CD8-positive, alpha-beta T cell (primary cell): ENCODE measurements at regions of chr6 and their contacts with region 1.

Region 1: DNA sequence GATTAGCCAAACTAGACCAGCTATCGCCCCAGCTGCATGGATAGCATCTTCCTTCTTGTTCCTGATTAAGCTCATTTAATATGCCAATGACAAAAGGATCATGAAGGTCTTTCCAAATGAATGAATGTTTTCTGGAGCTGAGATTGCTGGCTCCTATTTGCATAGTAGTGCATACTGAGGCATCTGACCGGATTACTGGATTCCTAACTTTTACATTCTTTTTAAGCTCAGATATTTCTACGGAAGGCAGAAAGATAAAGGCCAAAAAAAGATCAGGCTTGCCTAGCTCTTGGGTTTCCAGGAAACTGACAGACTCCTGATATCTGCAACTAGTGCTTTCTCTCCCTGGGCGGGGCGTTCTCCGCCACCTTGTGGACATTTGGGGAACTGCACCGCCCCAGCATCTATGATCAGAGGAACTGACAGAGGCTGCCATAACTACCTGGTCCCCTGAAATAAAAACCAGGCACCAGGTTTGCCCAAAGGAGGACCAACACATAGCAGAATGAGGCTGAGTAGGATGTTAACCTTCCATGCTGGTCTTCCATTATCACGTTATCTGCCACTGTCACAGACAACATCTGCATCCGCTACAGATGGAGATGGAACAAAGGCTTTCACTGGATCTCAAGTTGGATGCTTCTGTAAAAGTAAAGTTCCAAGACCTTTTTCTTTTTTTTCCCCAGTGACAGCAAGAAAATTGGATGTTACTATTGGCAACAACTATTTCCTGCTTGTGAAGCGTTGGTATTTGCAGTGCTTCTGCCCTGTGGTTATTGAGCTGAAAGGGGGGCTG is 33.2 kb downstream of the NT5E start:
- DNase-seq: peak; percentile 62 to 94 (median 78)
- ATAC-seq: peak; percentile 99
- H3K4me3 ChIP-seq: no peak overlapping the region
- H3K4me3 Mint-ChIP-seq: no peak overlapping the region
- H3K27ac ChIP-seq: no peak overlapping the region
- H3K27ac Mint-ChIP-seq: no peak overlapping the region
- H3K4me1 ChIP-seq: peaks cover 7% of the 10 kb centered on the region
- H3K4me1 Mint-ChIP-seq: peaks cover 13% of the 10 kb centered on the region
- H3K27me3 ChIP-seq: no peaks in the 10 kb centered on the region
- H3K27me3 Mint-ChIP-seq: no peaks in the 10 kb centered on the region
- CTCF ChIP-seq: peak; percentile 99

Region 2: GRCh38 chr6:85343428-85343827 is 139.7 kb before region 1 on chr6:
- CTCF ChIA-PET with region 1: interaction called, 14 read pairs
- POLR2A ChIA-PET with region 1: interaction called, 4 read pairs
- intact Hi-C with region 1: no loop called
- DNase-seq: no peak
- ATAC-seq: no peak
- H3K4me3 ChIP-seq: no peak overlapping the region
- H3K4me3 Mint-ChIP-seq: no peak overlapping the region
- H3K27ac ChIP-seq: no peak overlapping the region
- H3K27ac Mint-ChIP-seq: no peak overlapping the region
- H3K4me1 ChIP-seq: no peaks in the 10 kb centered on the region
- H3K4me1 Mint-ChIP-seq: no peaks in the 10 kb centered on the region
- H3K27me3 ChIP-seq: peaks cover 0 to 5% of the 10 kb centered on the region in 2 experiments
- H3K27me3 Mint-ChIP-seq: peaks cover 15% of the 10 kb centered on the region
- CTCF ChIP-seq: no peak

Region 3: DNA sequence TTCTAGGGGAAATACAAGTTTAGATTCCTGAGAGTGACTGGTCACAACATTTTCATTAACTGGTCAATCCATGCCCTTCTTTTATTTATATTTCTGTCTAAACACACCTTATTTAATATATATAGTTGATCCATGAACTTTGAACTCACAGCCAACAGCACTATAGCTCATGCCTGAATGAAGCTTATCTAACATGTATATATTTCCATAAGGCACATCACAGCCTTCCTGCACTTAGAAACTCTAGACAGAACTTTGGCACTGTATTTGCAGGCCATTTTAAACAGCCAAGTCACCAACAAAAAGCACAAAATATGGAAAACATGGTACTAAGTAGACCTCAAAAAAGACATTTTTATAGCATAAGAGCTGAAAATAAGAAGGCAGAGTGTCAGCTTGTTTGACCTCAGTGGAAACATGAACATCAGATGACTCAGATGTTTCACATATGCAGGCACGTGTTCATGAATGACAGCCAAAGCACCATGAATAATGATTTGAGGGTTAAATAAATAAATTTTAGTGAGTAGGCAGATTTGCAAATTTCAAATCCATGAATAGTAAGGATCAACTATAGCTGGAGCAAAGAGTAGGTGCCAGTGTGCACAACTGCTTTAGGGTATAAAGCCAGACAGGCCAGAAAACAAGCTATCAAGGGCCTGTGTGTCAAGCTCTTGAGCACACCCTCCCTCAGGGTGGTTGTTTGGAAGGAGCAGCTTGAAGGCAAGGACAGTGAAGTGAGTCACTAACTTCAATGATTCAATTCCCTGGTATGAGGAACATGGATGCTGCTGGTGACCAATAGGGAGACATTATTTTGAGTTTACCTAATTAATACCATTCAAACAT is 122.1 kb before region 1 on chr6:
- CTCF ChIA-PET with region 1: interaction called, 130 read pairs
- POLR2A ChIA-PET with region 1: no interaction called
- intact Hi-C with region 1: no loop called
- DNase-seq: no peak
- ATAC-seq: no peak
- H3K4me3 ChIP-seq: no peak overlapping the region
- H3K4me3 Mint-ChIP-seq: no peak overlapping the region
- H3K27ac ChIP-seq: no peak overlapping the region
- H3K27ac Mint-ChIP-seq: no peak overlapping the region
- H3K4me1 ChIP-seq: no peaks in the 10 kb centered on the region
- H3K4me1 Mint-ChIP-seq: no peaks in the 10 kb centered on the region
- H3K27me3 ChIP-seq: no peaks in the 10 kb centered on the region
- H3K27me3 Mint-ChIP-seq: no peaks in the 10 kb centered on the region
- CTCF ChIP-seq: no peak

Region 4: GRCh38 chr6:85412911-85413430 is 70.1 kb before region 1 on chr6:
- CTCF ChIA-PET with region 1: interaction called, 10 read pairs
- POLR2A ChIA-PET with region 1: no interaction called
- intact Hi-C with region 1: no loop called
- DNase-seq: no peak
- ATAC-seq: no peak
- H3K4me3 ChIP-seq: no peak overlapping the region
- H3K4me3 Mint-ChIP-seq: no peak overlapping the region
- H3K27ac ChIP-seq: no peak overlapping the region
- H3K27ac Mint-ChIP-seq: no peak overlapping the region
- H3K4me1 ChIP-seq: no peaks in the 10 kb centered on the region
- H3K4me1 Mint-ChIP-seq: peaks cover 7% of the 10 kb centered on the region
- H3K27me3 ChIP-seq: no peaks in the 10 kb centered on the region
- H3K27me3 Mint-ChIP-seq: no peaks in the 10 kb centered on the region
- CTCF ChIP-seq: no peak

Region 5: DNA sequence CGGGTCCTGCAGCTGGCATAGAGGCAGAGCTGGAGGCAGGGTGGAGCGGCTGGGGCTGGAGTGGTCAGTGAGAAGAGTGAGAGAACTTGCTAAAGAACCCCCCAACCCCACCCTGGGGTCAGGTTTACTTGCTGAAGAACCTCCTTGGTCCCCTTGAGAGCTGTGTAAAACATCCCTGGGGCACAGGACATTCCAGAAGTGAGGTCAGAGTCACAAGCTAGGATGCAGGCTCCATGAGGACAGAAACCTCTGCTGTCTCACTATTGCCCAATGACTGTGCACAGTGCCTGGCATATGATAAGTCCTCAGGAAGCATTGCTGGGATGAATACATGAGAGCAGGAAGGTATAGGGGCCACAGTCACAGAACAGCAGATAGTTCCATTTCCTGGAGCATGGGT is 14.8 kb before region 1 on chr6:
- CTCF ChIA-PET with region 1: interaction called, 74 read pairs
- POLR2A ChIA-PET with region 1: interaction called, 6 read pairs
- intact Hi-C with region 1: no loop called
- DNase-seq: no peak
- ATAC-seq: no peak
- H3K4me3 ChIP-seq: no peak overlapping the region
- H3K4me3 Mint-ChIP-seq: no peak overlapping the region
- H3K27ac ChIP-seq: no peak overlapping the region
- H3K27ac Mint-ChIP-seq: no peak overlapping the region
- H3K4me1 ChIP-seq: peaks cover 34% of the 10 kb centered on the region
- H3K4me1 Mint-ChIP-seq: peaks cover 51% of the 10 kb centered on the region
- H3K27me3 ChIP-seq: no peaks in the 10 kb centered on the region
- H3K27me3 Mint-ChIP-seq: no peaks in the 10 kb centered on the region
- CTCF ChIP-seq: no peak

Region 6: GRCh38 chr6:85537055-85537494 is 54.0 kb after region 1 on chr6:
- CTCF ChIA-PET with region 1: interaction called, 16 read pairs
- POLR2A ChIA-PET with region 1: no interaction called
- intact Hi-C with region 1: loop called in 1 of 2 experiments (anchors 1 kb)
- DNase-seq: peak in 2 of 9 experiments; percentile 2 to 21
- ATAC-seq: no peak
- H3K4me3 ChIP-seq: no peak overlapping the region
- H3K4me3 Mint-ChIP-seq: no peak overlapping the region
- H3K27ac ChIP-seq: no peak overlapping the region
- H3K27ac Mint-ChIP-seq: no peak overlapping the region
- H3K4me1 ChIP-seq: no peaks in the 10 kb centered on the region
- H3K4me1 Mint-ChIP-seq: peaks cover 2% of the 10 kb centered on the region
- H3K27me3 ChIP-seq: no peaks in the 10 kb centered on the region
- H3K27me3 Mint-ChIP-seq: no peaks in the 10 kb centered on the region
- CTCF ChIP-seq: peak; percentile 92